Brain microvascular endothelial cell (primary cell): ENCODE measurements at regions of chr3 and their contacts with region 1.

Region 1: DNA sequence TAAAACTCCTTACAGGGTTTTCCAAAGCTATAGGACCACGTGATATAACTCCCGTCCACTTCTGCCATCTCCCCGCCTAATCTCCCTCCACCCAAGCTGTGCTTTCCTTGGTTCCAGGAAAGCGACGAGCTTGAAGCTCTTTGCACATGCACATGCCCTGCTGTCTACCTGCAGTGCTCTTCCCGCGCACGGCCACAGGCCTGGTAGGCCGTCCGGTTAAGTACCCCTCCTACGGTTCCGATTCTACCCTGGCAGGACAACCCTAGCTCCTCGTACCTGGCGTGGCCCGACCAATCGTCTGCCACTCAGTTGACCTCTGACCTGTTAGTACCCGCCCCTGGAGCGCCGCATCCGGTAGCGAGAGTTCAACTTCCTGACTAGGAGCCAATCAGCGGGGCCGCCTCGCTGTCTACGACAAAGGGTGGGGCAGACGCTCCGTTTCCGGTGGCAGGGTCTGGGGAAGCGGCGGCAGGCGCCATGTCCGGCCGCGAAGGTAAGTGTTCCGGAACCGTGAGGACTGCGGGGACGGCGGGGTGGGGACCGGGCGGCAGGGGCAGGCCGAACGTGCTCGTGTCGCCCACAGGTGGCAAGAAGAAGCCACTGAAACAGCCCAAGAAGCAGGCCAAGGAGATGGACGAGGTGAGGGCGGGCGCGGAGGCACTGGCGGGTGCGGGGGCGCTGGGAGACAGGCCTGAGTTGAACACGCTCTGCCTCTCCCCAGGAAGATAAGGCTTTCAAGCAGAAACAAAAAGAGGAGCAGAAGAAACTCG is at the starts of genes CCDC51 and TMA7:
- DNase-seq: peak; percentile 96
- H3K4me3 ChIP-seq: peak within 1 kb of the TSS; percentile 98
- H3K27ac ChIP-seq: peak within 1 kb of the TSS; percentile 81
- H3K27me3 ChIP-seq: no peaks in the 10 kb centered on the region
- CTCF ChIP-seq: no peak

Region 2: GRCh38 chr3:48273594-48274211 is 166.3 kb before region 1 on chr3:
- in situ Hi-C with region 1: loop called (anchors 25 kb)
- DNase-seq: peak; percentile 48
- H3K4me3 ChIP-seq: no peak overlapping the region
- H3K27ac ChIP-seq: no peak overlapping the region
- H3K27me3 ChIP-seq: no peaks in the 10 kb centered on the region
- CTCF ChIP-seq: peak; percentile 86